ENCODE measurements at regions of chr16 and their contacts with region 1.

Region 1: GRCh38 chr16:30698139-30698815 is 694 bp upstream of the SRCAP start:
- DNase-seq: peak; percentile 97 to 99 (median 98)
- ATAC-seq: peak; percentile 82
- H3K4me3 ChIP-seq: peak overlapping the region; percentile 82
- H3K27ac ChIP-seq: peak overlapping the region; percentile 100
- H3K4me1 ChIP-seq: peaks cover 26 to 27% of the 10 kb centered on the region in 2 experiments
- H3K27me3 ChIP-seq: no peaks in the 10 kb centered on the region
- CTCF ChIP-seq: peak in 1 of 3 experiments; percentile 33; a peak in 2 of 6 replicates
- EP300 ChIP-seq: peak; percentile 9; the same call in 1 of the 2 replicates
- POLR2A ChIP-seq: peak; percentile 96
- RAD21 ChIP-seq: no peak

Region 2: GRCh38 chr16:30534368-30535105 is 163.7 kb before region 1 on chr16 and contains the start of gene ZNF747:
- CTCF ChIA-PET with region 1: no interaction called
- POLR2A ChIA-PET with region 1: no interaction called
- in situ Hi-C with region 1: no loop called
- intact Hi-C with region 1: loop called (anchors 10 kb)
- DNase-seq: peak; percentile 83 to 94 (median 88)
- ATAC-seq: peak; percentile 88
- H3K4me3 ChIP-seq: peak within 1 kb of the TSS; percentile 49
- H3K27ac ChIP-seq: peak within 1 kb of the TSS; percentile 96
- H3K4me1 ChIP-seq: peaks cover 9 to 50% of the 10 kb centered on the region in 2 experiments; a peak in 4 of 5 replicates
- H3K27me3 ChIP-seq: no peaks in the 10 kb centered on the region
- CTCF ChIP-seq: peak in 1 of 3 experiments; percentile 6; a peak in 2 of 6 replicates
- EP300 ChIP-seq: no peak
- POLR2A ChIP-seq: no peak
- RAD21 ChIP-seq: 0 out of 4 replicates have a peak, but pooled peaks of 1 of the 2 experiments have one; percentile 5
- polyA plus RNA-seq, gene ZNF747: 0.14 to 0.27 TPM

Region 3: DNA sequence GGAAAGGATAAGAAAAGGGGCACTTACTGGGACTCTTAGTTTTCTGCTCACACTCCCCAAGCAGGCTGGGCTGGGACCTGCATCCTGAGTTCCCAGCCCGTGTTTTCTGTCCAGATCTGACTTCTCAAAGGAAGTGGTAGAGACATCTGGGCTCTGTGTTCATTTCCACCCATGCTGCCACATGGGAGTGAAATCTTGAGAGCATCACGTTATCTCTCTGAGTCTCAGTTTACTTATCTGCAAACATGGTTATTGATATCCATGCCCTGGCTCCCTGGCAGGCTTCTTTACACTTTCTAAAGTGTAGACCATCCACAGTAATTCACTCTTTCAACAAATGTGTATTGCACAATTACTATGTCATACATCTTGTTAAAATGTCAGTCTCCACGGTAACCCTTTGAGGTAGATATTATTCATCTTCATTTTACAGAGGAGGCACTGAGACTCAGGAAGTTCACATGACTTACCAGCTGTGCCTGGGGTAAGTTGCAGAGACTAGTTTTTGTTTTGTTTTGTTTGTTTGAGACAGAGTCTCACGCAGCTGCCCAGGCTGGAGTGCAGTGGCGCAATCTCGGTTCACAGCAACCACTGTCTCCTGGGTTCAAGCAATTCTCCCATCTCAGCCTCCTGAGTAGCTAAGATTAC is 130.2 kb before region 1 on chr16:
- CTCF ChIA-PET with region 1: no interaction called
- POLR2A ChIA-PET with region 1: no interaction called
- in situ Hi-C with region 1: no loop called
- intact Hi-C with region 1: no loop called
- DNase-seq: no peak
- ATAC-seq: no peak
- H3K4me3 ChIP-seq: no peak overlapping the region
- H3K27ac ChIP-seq: no peak overlapping the region
- H3K4me1 ChIP-seq: peaks cover 12 to 30% of the 10 kb centered on the region in 2 experiments
- H3K27me3 ChIP-seq: no peaks in the 10 kb centered on the region
- CTCF ChIP-seq: no peak
- EP300 ChIP-seq: no peak
- POLR2A ChIP-seq: no peak
- RAD21 ChIP-seq: no peak

Region 4: DNA sequence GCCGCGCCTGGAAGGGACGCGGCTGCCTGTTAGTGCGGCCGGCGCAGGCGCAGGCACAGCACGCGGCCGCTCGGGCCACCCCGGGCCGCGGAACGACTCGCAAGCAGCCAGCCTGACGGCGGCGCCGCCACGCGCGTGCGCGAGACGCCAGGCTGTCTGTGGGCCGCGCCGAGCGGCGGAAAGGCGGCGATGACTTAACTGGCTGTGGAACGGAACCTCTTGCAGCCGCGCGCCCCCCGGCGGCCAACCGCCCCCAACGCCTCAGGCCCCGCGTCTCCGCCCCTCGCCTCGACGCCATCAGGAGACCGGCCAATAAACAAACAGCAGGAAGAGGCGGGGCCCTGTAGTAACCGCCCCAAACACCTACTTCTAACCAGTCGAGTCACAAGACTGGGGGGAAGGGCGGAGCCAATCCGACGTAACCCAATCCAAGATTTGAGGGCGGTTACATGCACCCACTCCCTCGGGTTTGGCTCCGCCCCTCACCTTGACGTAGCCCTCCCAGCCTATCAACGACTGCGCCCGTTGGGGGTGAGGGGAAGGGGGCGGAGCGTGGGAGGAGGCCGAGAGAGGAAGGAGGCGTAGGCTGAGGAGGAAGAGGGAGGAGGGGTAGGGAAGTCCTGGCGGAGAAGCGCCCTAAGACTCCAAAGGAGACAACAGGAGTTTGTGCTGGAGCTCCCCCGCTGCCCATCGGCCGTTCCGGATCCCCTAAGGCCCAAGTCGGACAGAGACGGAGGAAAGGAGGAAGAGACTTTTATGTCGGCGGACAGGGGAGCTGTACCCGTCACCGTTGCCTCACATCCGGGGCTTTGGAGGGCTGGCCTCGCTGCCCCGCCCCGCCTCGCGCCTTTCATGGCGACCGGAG is 40.2 kb before region 1 on chr16 and contains the start of gene FBRS:
- CTCF ChIA-PET with region 1: no interaction called
- POLR2A ChIA-PET with region 1: interaction called, 11 read pairs
- in situ Hi-C with region 1: no loop called
- intact Hi-C with region 1: loop called (anchors 2 kb)
- DNase-seq: peak; percentile 93 to 100 (median 96)
- ATAC-seq: peak; percentile 88
- H3K4me3 ChIP-seq: peak within 1 kb of the TSS; percentile 90
- H3K27ac ChIP-seq: peak within 1 kb of the TSS; percentile 99
- H3K4me1 ChIP-seq: peaks cover 20 to 52% of the 10 kb centered on the region in 2 experiments; a peak in 4 of 5 replicates
- H3K27me3 ChIP-seq: no peaks in the 10 kb centered on the region
- CTCF ChIP-seq: peak; percentile 90 to 97 (median 90)
- EP300 ChIP-seq: no peak
- POLR2A ChIP-seq: peak; percentile 95
- RAD21 ChIP-seq: peak; percentile 78 to 82
- polyA plus RNA-seq, gene FBRS: 0.32 to 0.46 TPM

Region 5: DNA sequence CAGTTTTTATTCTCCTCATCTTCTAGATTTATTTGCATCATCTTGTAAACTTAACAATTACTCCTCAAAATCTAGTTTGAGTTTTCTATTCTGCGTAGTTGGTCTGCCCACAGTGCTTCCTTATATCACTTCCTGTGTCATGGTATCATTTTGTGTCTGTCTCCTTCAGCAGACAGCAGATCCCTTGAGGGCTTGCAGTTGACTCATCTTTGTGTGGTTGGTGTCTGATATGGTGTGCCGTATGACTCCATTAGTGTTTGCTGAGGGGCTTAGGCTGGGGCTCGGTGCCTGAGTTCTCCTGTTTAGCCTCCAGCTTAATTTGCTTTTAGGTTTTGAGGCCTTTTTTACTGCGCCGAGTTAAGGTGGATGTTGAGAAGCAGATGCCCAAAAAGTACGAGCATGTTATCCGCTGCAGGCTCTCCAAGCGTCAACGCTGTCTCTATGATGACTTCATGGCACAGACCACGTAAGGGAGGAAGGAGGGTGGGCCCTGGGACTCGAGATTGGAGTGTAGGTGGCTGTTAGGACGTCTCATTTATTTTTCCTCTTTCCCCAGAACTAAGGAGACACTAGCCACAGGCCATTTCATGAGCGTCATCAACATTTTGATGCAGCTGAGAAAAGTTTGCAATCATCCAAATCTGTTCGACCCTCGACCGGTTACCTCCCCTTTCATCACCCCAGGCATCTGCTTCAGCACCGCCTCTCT is 17.6 kb after region 1 on chr16:
- CTCF ChIA-PET with region 1: no interaction called
- POLR2A ChIA-PET with region 1: interaction called, 10 read pairs
- in situ Hi-C with region 1: no loop called
- intact Hi-C with region 1: no loop called
- DNase-seq: peak in 1 of 4 experiments; percentile 24
- ATAC-seq: no peak; the same call in none of the 3 replicates
- H3K4me3 ChIP-seq: no peak overlapping the region
- H3K27ac ChIP-seq: no peak overlapping the region; the same call in 2 of the 3 replicates
- H3K4me1 ChIP-seq: no peaks in the 10 kb centered on the region
- H3K27me3 ChIP-seq: no peaks in the 10 kb centered on the region
- CTCF ChIP-seq: no peak
- EP300 ChIP-seq: no peak
- POLR2A ChIP-seq: no peak
- RAD21 ChIP-seq: no peak

Region 6: DNA sequence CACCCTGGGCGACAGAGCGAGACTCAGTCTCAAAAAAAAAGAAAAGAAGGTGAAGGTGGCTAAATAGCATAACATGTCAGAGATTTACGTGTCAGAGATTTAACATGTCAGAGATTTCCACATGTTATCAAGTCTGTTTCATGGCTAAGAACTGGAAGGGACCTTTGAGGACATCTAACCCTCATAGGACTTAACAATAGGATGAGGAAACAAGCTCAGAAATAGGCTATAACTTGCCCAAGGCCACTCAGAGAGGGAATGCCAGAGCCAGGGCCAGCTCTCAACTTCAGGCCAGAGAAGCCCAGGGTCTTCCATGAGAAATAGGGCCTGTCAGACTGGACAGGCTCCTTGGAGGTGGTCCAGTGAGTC is 115.5 kb after region 1 on chr16:
- CTCF ChIA-PET with region 1: no interaction called
- POLR2A ChIA-PET with region 1: no interaction called
- in situ Hi-C with region 1: no loop called
- intact Hi-C with region 1: loop called (anchors 2 kb)
- DNase-seq: no peak
- ATAC-seq: no peak
- H3K4me3 ChIP-seq: peak overlapping the region; percentile 41
- H3K27ac ChIP-seq: peak overlapping the region; percentile 69
- H3K4me1 ChIP-seq: peaks cover 16% of the 10 kb centered on the region in 2 experiments
- H3K27me3 ChIP-seq: no peaks in the 10 kb centered on the region
- CTCF ChIP-seq: no peak
- EP300 ChIP-seq: no peak
- POLR2A ChIP-seq: no peak
- RAD21 ChIP-seq: no peak

Region 7: GRCh38 chr16:30875871-30876801 is 177.9 kb after region 1 on chr16:
- CTCF ChIA-PET with region 1: no interaction called
- POLR2A ChIA-PET with region 1: no interaction called
- in situ Hi-C with region 1: no loop called
- intact Hi-C with region 1: no loop called
- DNase-seq: peak in 2 of 4 experiments; percentile 70 to 79
- ATAC-seq: peak; percentile 40
- H3K4me3 ChIP-seq: peak overlapping the region; percentile 77
- H3K27ac ChIP-seq: peak overlapping the region; percentile 88
- H3K4me1 ChIP-seq: peaks cover 13 to 36% of the 10 kb centered on the region in 2 experiments
- H3K27me3 ChIP-seq: no peaks in the 10 kb centered on the region
- CTCF ChIP-seq: no peak
- EP300 ChIP-seq: peak; percentile 42
- POLR2A ChIP-seq: no peak
- RAD21 ChIP-seq: no peak

Measured in K562 (cell line).